Dorsolateral prefrontal cortex (tissue), 120 donors: ENCODE measurements at regions of chr20 and their contacts with region 1.

Region 1: DNA sequence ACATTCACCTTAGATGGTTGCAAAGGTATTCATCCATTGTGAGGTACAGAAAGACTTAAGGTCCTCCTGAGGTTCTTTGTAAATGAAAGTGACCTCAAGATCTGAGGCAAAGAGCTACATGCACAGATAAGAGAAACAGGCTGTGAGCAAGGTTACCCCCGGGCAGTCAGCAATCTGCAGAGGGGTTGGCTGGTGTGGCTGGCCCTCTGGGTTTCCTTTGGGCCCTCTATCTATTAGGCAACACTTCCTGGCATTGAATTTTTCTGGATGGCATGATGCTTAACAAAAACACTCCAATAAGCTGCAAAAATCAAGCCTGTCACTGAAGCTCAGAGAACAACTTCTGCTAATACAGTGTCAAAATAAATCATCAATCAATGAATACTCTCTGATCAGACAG is 48.9 kb upstream of the RALGAPA2 start:
- DNase-seq: no peak
- H3K4me3 ChIP-seq: no peak overlapping the region
- H3K27ac ChIP-seq: peak overlapping the region in 1 of 59 donors; percentile 7
- H3K27me3 ChIP-seq: peaks cover 0 to 4% (median 0%) of the 10 kb centered on the region in 45 donors
- CTCF ChIP-seq: no peak

Region 2: GRCh38 chr20:20457392-20458126 is 303.7 kb before region 1 on chr20:
- intact Hi-C with region 1: no loop called
- DNase-seq: no peak
- H3K4me3 ChIP-seq: no peak overlapping the region
- H3K27ac ChIP-seq: no peak overlapping the region
- H3K27me3 ChIP-seq: no peaks in the 10 kb centered on the region
- CTCF ChIP-seq: no peak

Region 3: GRCh38 chr20:20664795-20665589 is 96.3 kb before region 1 on chr20:
- intact Hi-C with region 1: loop called in 1 of 2 experiments (anchors 10 kb)
- DNase-seq: no peak
- H3K4me3 ChIP-seq: no peak overlapping the region
- H3K27ac ChIP-seq: no peak overlapping the region
- H3K27me3 ChIP-seq: no peaks in the 10 kb centered on the region
- CTCF ChIP-seq: peak in 55 of 56 donors; percentile 20 to 78 (median 59)

Region 4: GRCh38 chr20:20814685-20815084 is 53.4 kb after region 1 on chr20:
- intact Hi-C with region 1: loop called in 1 of 2 experiments (anchors 5 kb)
- DNase-seq: no peak
- H3K4me3 ChIP-seq: no peak overlapping the region
- H3K27ac ChIP-seq: no peak overlapping the region
- H3K27me3 ChIP-seq: peaks cover 0 to 4% (median 0%) of the 10 kb centered on the region in 45 donors
- CTCF ChIP-seq: no peak

Region 5: GRCh38 chr20:20864351-20865096 is 103.2 kb after region 1 on chr20:
- intact Hi-C with region 1: no loop called
- DNase-seq: no peak
- H3K4me3 ChIP-seq: no peak overlapping the region
- H3K27ac ChIP-seq: no peak overlapping the region
- H3K27me3 ChIP-seq: peaks cover 0 to 8% (median 0%) of the 10 kb centered on the region in 45 donors
- CTCF ChIP-seq: peak in 53 of 56 donors; percentile 24 to 70 (median 46)